AG04450 (cell line): ENCODE measurements at regions of chr9 and their contacts with region 1.

Region 1: DNA sequence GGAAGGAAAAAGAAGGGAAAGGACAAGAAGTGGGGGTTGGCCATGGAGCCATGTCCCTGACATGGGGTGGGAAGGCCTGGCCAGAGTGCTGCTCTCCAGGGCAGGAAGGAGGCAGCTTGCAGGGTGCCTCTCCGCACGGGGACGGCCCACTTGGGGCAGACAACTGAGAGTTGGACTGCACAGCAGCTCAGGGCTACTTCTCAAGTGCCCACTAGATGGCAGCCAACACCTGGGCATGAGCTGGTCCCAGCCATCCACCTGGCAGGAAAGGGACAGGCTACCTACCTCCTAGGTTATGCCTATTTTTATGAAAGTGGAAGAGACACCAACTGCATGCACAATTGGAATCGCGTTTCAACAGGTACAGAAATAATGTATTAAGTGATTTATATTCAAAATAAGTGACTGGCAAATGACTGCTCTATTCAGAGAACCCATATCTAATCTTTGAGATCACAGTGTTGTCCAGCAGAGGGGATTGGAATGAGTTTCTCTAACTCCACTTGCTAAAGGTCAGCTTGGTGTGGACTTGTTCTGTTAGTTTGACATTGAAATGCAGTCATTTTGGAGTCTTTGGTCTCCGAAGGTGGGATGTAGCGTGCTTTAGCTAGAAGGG is 113.4 kb downstream of the SYK start:
- DNase-seq: peak; percentile 51
- H3K4me3 ChIP-seq: no peak overlapping the region
- H3K27ac ChIP-seq: no peak overlapping the region
- H3K27me3 ChIP-seq: no peaks in the 10 kb centered on the region
- CTCF ChIP-seq: peak; percentile 88

Region 2: GRCh38 chr9:90479701-90480100 is 435.3 kb before region 1 on chr9:
- CTCF ChIA-PET with region 1: no interaction called
- POLR2A ChIA-PET with region 1: no interaction called
- DNase-seq: no peak
- H3K4me3 ChIP-seq: no peak overlapping the region
- H3K27ac ChIP-seq: no peak overlapping the region
- H3K27me3 ChIP-seq: no peaks in the 10 kb centered on the region
- CTCF ChIP-seq: no peak

Region 3: DNA sequence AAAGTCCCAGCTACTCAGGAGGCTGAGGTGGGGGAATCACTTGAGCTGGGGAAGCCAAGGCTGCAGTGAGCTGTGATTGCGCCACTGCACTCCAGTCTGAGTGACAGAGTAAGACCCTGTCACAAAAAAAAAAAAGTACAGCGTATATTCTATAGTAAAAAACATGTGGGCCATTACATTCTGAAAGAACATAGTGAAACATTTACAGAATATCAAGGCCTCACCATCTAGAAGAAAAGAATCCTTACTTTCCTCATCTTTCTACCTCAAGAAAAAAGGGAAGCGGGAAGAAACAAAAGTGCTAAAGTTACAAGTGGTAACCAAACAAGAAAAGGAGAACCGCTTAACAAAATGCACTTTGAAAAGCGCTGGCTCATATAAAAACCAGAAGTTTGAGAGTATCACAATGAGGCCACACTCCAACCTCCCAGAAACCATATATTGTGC is 119.1 kb before region 1 on chr9:
- CTCF ChIA-PET with region 1: no interaction called
- POLR2A ChIA-PET with region 1: no interaction called
- DNase-seq: no peak
- H3K4me3 ChIP-seq: no peak overlapping the region
- H3K27ac ChIP-seq: no peak overlapping the region
- H3K27me3 ChIP-seq: peaks cover 2% of the 10 kb centered on the region
- CTCF ChIP-seq: no peak

Region 4: GRCh38 chr9:90860826-90861225 is 54.1 kb before region 1 on chr9:
- CTCF ChIA-PET with region 1: no interaction called
- POLR2A ChIA-PET with region 1: no interaction called
- DNase-seq: no peak
- H3K4me3 ChIP-seq: no peak overlapping the region
- H3K27ac ChIP-seq: no peak overlapping the region
- H3K27me3 ChIP-seq: no peaks in the 10 kb centered on the region
- CTCF ChIP-seq: no peak

Region 5: DNA sequence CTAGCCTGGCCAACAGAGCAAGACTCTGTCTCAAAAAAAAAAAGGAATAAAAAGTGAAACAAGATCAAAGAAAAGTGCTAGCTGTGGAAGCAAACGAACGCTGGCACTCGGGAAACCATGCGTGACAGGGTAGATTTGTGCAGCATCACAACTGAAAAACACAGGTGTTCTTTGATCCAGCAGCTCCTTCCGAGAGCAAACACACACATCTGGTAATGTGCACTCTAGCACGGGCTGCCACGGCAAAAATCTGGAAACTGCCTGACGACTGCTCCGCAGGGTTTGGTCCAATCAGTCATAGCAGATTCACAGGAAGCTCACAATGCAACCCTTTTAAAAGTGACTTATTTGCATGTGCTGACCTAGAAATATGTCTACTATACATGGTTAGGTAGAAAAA is 33.3 kb before region 1 on chr9:
- CTCF ChIA-PET with region 1: no interaction called
- POLR2A ChIA-PET with region 1: no interaction called
- DNase-seq: no peak
- H3K4me3 ChIP-seq: no peak overlapping the region
- H3K27ac ChIP-seq: no peak overlapping the region
- H3K27me3 ChIP-seq: peaks cover 6% of the 10 kb centered on the region
- CTCF ChIP-seq: no peak

Region 6: GRCh38 chr9:91423785-91424402 is 508.9 kb after region 1 on chr9 and contains the start of gene NFIL3:
- CTCF ChIA-PET with region 1: interaction called, 27 read pairs
- POLR2A ChIA-PET with region 1: no interaction called
- DNase-seq: no peak
- H3K4me3 ChIP-seq: peak within 1 kb of the TSS; percentile 94
- H3K27ac ChIP-seq: peak within 1 kb of the TSS; percentile 91
- H3K27me3 ChIP-seq: no peaks in the 10 kb centered on the region
- CTCF ChIP-seq: no peak
- polyA plus RNA-seq, gene NFIL3: 30.2 and 30.3 TPM in 2 replicates

Region 7: GRCh38 chr9:91433180-91433579 is 518.2 kb after region 1 on chr9:
- CTCF ChIA-PET with region 1: interaction called, 22 read pairs
- POLR2A ChIA-PET with region 1: no interaction called
- DNase-seq: peak; percentile 90
- H3K4me3 ChIP-seq: no peak overlapping the region
- H3K27ac ChIP-seq: no peak overlapping the region
- H3K27me3 ChIP-seq: no peaks in the 10 kb centered on the region
- CTCF ChIP-seq: peak; percentile 58

Region 8: GRCh38 chr9:91681461-91682305 is 766.7 kb after region 1 on chr9:
- CTCF ChIA-PET with region 1: interaction called, 12 read pairs
- POLR2A ChIA-PET with region 1: no interaction called
- DNase-seq: peak; percentile 6
- H3K4me3 ChIP-seq: no peak overlapping the region
- H3K27ac ChIP-seq: no peak overlapping the region
- H3K27me3 ChIP-seq: no peaks in the 10 kb centered on the region
- CTCF ChIP-seq: peak; percentile 92

Region 9: GRCh38 chr9:91727316-91727861 is 812.4 kb after region 1 on chr9:
- CTCF ChIA-PET with region 1: interaction called, 20 read pairs
- POLR2A ChIA-PET with region 1: no interaction called
- DNase-seq: peak; percentile 26
- H3K4me3 ChIP-seq: no peak overlapping the region
- H3K27ac ChIP-seq: no peak overlapping the region
- H3K27me3 ChIP-seq: no peaks in the 10 kb centered on the region
- CTCF ChIP-seq: peak; percentile 73